T-cell (primary cell): ENCODE measurements at regions of chr17 and their contacts with region 1.

Region 1: DNA sequence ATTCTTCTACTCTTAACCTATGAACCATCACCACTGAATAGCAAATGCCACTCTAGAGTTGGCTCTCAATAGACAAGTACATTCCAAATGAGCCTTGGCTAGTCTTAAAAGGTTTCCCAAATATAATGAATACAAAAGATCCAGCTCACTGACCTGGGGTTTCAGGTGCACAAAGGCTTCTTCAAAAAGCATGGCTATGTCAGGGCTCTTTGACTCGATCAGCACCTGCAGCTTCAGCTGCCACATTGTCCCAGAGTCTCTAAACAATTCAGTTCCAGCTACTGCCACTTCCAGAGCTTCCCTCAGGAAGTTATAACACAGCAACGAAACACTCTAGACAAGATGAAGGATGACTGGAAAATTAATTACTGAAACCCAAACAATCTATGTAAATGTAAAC is 16.0 kb upstream of the COPRS start:
- DNase-seq: no peak
- ATAC-seq: no peak
- H3K4me3 ChIP-seq: no peak overlapping the region
- H3K4me3 Mint-ChIP-seq: no peak overlapping the region
- H3K27ac ChIP-seq: no peak overlapping the region
- H3K27ac Mint-ChIP-seq: no peak overlapping the region
- H3K4me1 ChIP-seq: no peaks in the 10 kb centered on the region
- H3K4me1 Mint-ChIP-seq: no peaks in the 10 kb centered on the region
- H3K27me3 ChIP-seq: no peaks in the 10 kb centered on the region
- H3K27me3 Mint-ChIP-seq: no peaks in the 10 kb centered on the region

Region 2: GRCh38 chr17:31842183-31843069 is 32.7 kb before region 1 on chr17:
- CTCF ChIA-PET with region 1: interaction called in 1 of 2 experiments, 11 read pairs
- POLR2A ChIA-PET with region 1: no interaction called
- DNase-seq: peak; percentile 20 to 84 (median 50)
- ATAC-seq: peak; percentile 64 to 90 (median 82)
- H3K4me3 ChIP-seq: no peak overlapping the region
- H3K4me3 Mint-ChIP-seq: no peak overlapping the region
- H3K27ac ChIP-seq: no peak overlapping the region
- H3K27ac Mint-ChIP-seq: no peak overlapping the region
- H3K4me1 ChIP-seq: peaks cover 0 to 7% of the 10 kb centered on the region in 2 experiments
- H3K4me1 Mint-ChIP-seq: no peaks in the 10 kb centered on the region
- H3K27me3 ChIP-seq: peaks cover 0 to 31% of the 10 kb centered on the region in 2 experiments
- H3K27me3 Mint-ChIP-seq: peaks cover 4 to 11% of the 10 kb centered on the region in 2 donors

Region 3: DNA sequence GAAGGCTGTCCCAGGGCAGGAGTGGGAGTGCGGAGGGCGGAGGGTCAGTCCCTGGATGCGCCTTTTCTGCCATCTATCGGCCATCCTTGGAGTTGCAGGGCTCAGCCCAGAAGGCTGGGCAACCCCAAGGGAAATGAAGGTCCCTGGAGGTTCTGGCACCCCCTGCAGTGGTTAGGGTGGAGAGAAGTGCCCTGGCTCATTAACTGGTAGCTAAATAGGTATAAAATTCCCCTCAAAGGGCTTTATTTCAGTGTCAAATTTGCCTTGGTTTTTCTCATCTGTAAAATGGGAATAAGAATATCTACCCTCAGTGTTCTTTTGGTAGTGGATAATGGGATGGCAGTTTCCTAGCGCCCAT is 444.4 kb after region 1 on chr17:
- CTCF ChIA-PET with region 1: no interaction called
- POLR2A ChIA-PET with region 1: no interaction called
- DNase-seq: peak; percentile 13 to 81 (median 58)
- ATAC-seq: peak; percentile 82 to 88 (median 86)
- H3K4me3 ChIP-seq: peak overlapping the region in 1 of 2 donors; percentile 4
- H3K4me3 Mint-ChIP-seq: peak overlapping the region; percentile 61 to 76 (median 66)
- H3K27ac ChIP-seq: no peak overlapping the region
- H3K27ac Mint-ChIP-seq: no peak overlapping the region
- H3K4me1 ChIP-seq: peaks cover 0 to 24% of the 10 kb centered on the region in 2 experiments
- H3K4me1 Mint-ChIP-seq: peaks cover 12 to 26% (median 14%) of the 10 kb centered on the region in 3 donors
- H3K27me3 ChIP-seq: peaks cover 0 to 22% of the 10 kb centered on the region in 2 experiments
- H3K27me3 Mint-ChIP-seq: peaks cover 3% of the 10 kb centered on the region in 2 donors